Activated CD4-positive, alpha-beta T cell treated with anti-CD3 and anti-CD28 coated beads for 36 hours (primary cell): ENCODE measurements at regions of chr2 and their contacts with region 1.

Region 1: DNA sequence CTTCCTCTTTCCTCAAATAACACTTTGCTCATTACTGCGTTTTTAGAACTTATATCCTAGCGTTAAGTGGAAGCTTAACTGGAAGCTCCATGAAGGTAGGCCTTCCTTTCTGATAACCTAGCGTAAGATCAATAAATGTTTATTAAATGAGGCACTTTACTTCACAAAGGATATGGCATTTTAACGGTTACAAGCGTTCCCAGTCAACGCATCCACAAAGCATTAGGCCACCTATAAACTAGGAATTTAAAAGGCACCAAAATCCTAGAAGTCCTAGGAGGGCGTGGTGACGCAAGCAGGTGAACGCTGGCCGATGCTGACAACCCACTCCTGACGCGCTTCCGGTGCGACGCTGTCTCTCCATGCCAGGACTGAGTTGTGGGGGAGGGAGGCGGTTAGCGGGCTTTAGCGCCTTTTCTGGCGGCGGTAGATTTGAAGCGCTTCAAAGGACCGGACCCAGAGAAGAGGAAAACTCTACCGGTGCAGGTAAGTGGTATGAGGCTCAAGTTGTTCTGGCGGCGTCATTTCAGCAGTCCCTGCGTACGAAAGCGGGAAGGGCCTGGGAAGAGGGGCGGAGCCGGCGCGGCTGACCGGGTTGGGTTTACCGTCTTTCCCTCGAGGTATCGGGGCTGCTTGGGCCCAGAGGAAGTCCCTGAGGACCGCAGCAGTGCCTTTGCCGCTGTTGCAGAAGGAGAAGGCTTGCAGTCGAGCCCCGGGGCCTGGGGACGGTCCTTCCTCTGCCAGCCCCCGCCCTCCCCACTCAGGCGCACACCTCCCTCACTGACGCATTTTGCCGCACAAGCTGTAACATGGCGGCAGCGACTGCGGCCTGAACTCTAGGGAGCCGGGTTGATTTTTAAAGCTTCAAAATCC is at the start of gene PPIG:
- DNase-seq: peak; percentile 94
- ATAC-seq: peak; percentile 93
- H3K4me3 Mint-ChIP-seq: peak within 1 kb of the TSS; percentile 99
- H3K27ac Mint-ChIP-seq: peak within 1 kb of the TSS; percentile 99
- H3K4me1 Mint-ChIP-seq: peaks cover 34% of the 10 kb centered on the region
- H3K27me3 Mint-ChIP-seq: no peaks in the 10 kb centered on the region
- total RNA-seq, gene PPIG: 57.6 to 58.6 TPM

Region 2: DNA sequence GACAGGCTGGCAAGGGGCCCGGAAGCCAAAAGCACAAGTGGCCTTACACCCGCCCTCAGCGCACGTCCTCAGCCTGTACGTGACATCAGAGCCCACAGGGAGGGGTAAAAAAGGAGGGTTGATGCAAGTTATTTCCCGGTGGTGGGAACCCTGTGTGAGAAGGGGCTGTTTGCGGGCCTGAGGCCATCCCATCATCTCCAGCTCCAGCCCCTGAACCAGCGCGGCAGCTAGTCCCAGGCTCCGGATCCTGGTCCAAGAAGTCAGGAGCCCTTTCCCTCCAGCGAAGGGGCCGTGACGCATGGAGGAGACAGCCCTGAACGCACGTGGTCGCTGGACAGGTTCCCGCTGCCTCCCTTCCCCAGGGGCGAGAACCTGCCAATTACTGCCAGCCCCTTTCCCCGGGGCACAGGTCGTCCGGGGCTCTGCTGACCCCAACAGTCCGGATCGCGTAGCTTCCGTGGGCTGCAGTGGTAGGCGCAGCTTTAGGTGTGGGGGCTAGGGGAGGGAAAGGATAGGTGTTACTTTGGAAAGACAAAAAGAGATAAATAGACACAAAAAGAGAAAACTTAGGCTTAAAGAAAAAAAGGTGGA is 220.6 kb before region 1 on chr2:
- CTCF ChIA-PET with region 1: no interaction called
- POLR2A ChIA-PET with region 1: no interaction called
- intact Hi-C with region 1: loop called in 1 of 2 experiments (anchors 5 kb)
- DNase-seq: peak; percentile 80
- ATAC-seq: peak; percentile 73
- H3K4me3 Mint-ChIP-seq: peak overlapping the region; percentile 86
- H3K27ac Mint-ChIP-seq: peak overlapping the region; percentile 49
- H3K4me1 Mint-ChIP-seq: peaks cover 29% of the 10 kb centered on the region
- H3K27me3 Mint-ChIP-seq: peaks cover 38% of the 10 kb centered on the region

Region 3: GRCh38 chr2:169573160-169573973 is 10.9 kb before region 1 on chr2 and contains the start of gene FASTKD1:
- CTCF ChIA-PET with region 1: interaction called, 18 read pairs
- POLR2A ChIA-PET with region 1: interaction called, 18 read pairs
- intact Hi-C with region 1: loop called (anchors 1 kb)
- DNase-seq: peak; percentile 94
- ATAC-seq: peak; percentile 100
- H3K4me3 Mint-ChIP-seq: peak within 1 kb of the TSS; percentile 97
- H3K27ac Mint-ChIP-seq: peak within 1 kb of the TSS; percentile 92
- H3K4me1 Mint-ChIP-seq: peaks cover 20% of the 10 kb centered on the region
- H3K27me3 Mint-ChIP-seq: no peaks in the 10 kb centered on the region
- total RNA-seq, gene FASTKD1: 29.8 to 39.7 TPM

Region 4: GRCh38 chr2:169598982-169599381 is 14.7 kb after region 1 on chr2:
- CTCF ChIA-PET with region 1: interaction called, 4 read pairs
- POLR2A ChIA-PET with region 1: interaction called, 10 read pairs
- intact Hi-C with region 1: no loop called
- DNase-seq: no peak
- ATAC-seq: no peak
- H3K4me3 Mint-ChIP-seq: no peak overlapping the region
- H3K27ac Mint-ChIP-seq: no peak overlapping the region
- H3K4me1 Mint-ChIP-seq: peaks cover 19% of the 10 kb centered on the region
- H3K27me3 Mint-ChIP-seq: no peaks in the 10 kb centered on the region

Region 5: GRCh38 chr2:169683054-169683424 is 98.8 kb after region 1 on chr2:
- CTCF ChIA-PET with region 1: no interaction called
- POLR2A ChIA-PET with region 1: no interaction called
- intact Hi-C with region 1: loop called in 1 of 2 experiments (anchors 5 kb)
- DNase-seq: peak; percentile 40
- ATAC-seq: peak; percentile 98
- H3K4me3 Mint-ChIP-seq: no peak overlapping the region
- H3K27ac Mint-ChIP-seq: peak overlapping the region; percentile 78
- H3K4me1 Mint-ChIP-seq: peaks cover 15% of the 10 kb centered on the region
- H3K27me3 Mint-ChIP-seq: peaks cover 2% of the 10 kb centered on the region

Region 6: DNA sequence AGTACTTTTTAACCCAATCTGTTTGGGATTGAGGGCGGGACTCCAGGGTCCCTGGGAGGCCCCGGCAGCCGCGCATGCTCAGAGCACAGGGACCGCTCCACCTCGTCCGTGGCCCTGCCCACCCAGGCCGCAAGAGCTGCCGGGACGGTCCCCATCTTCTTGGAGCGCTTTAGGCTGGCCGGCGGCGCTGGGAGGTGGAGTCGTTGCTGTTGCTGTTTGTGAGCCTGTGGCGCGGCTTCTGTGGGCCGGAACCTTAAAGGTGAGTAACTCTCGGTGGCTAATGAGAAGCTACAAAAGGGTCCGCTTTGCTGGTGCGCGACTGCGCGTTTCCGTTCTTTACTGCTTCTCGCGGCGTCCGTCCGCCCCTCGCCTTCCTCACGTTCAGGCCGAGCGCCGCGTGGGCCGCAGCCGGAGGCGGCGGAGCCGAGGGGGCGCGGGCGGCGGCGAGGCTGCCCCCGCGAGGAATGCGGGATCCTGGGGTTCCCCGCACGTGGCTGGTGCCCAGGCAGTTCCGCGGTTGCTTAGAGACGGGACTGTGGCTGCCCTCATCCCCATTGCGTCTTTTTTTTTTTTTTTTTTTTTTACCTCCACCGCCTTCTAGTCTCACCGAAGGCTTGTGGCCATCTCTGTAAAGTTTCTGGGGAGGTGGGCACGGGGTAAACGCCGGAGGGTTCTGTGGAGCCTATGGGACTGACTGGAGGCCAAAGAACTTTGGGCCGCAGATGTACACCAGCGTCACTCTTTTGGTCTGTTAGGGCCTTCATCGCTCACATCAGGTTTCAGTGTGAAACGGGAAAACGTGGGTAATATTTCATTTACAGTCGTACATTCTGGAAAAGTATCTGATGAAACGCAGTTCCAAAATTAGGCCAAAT is 214.7 kb after region 1 on chr2 and contains the start of gene SSB:
- CTCF ChIA-PET with region 1: no interaction called
- POLR2A ChIA-PET with region 1: interaction called, 4 read pairs
- intact Hi-C with region 1: loop called (anchors 1 to 2 kb)
- DNase-seq: peak; percentile 98
- ATAC-seq: peak; percentile 98
- H3K4me3 Mint-ChIP-seq: peak within 1 kb of the TSS; percentile 93
- H3K27ac Mint-ChIP-seq: peak within 1 kb of the TSS; percentile 91
- H3K4me1 Mint-ChIP-seq: peaks cover 22% of the 10 kb centered on the region
- H3K27me3 Mint-ChIP-seq: no peaks in the 10 kb centered on the region
- total RNA-seq, gene SSB: 127 to 138 TPM

Region 7: GRCh38 chr2:169877398-169877797 is 293.2 kb after region 1 on chr2:
- CTCF ChIA-PET with region 1: no interaction called
- POLR2A ChIA-PET with region 1: no interaction called
- intact Hi-C with region 1: no loop called
- DNase-seq: no peak
- ATAC-seq: no peak
- H3K4me3 Mint-ChIP-seq: no peak overlapping the region
- H3K27ac Mint-ChIP-seq: no peak overlapping the region
- H3K4me1 Mint-ChIP-seq: no peaks in the 10 kb centered on the region
- H3K27me3 Mint-ChIP-seq: no peaks in the 10 kb centered on the region

Region 8: GRCh38 chr2:170204298-170204951 is 620.2 kb after region 1 on chr2:
- CTCF ChIA-PET with region 1: no interaction called
- POLR2A ChIA-PET with region 1: no interaction called
- intact Hi-C with region 1: no loop called
- DNase-seq: no peak
- ATAC-seq: no peak
- H3K4me3 Mint-ChIP-seq: no peak overlapping the region
- H3K27ac Mint-ChIP-seq: no peak overlapping the region
- H3K4me1 Mint-ChIP-seq: no peaks in the 10 kb centered on the region
- H3K27me3 Mint-ChIP-seq: peaks cover 12% of the 10 kb centered on the region

Region 9: GRCh38 chr2:170221317-170222288 is 637.4 kb after region 1 on chr2:
- CTCF ChIA-PET with region 1: no interaction called
- POLR2A ChIA-PET with region 1: no interaction called
- intact Hi-C with region 1: no loop called
- DNase-seq: no peak
- ATAC-seq: no peak
- H3K4me3 Mint-ChIP-seq: no peak overlapping the region
- H3K27ac Mint-ChIP-seq: no peak overlapping the region
- H3K4me1 Mint-ChIP-seq: no peaks in the 10 kb centered on the region
- H3K27me3 Mint-ChIP-seq: no peaks in the 10 kb centered on the region